Transverse colon (tissue), 4 donors: ENCODE measurements at regions of chr2 and their contacts with region 1.

Region 1: DNA sequence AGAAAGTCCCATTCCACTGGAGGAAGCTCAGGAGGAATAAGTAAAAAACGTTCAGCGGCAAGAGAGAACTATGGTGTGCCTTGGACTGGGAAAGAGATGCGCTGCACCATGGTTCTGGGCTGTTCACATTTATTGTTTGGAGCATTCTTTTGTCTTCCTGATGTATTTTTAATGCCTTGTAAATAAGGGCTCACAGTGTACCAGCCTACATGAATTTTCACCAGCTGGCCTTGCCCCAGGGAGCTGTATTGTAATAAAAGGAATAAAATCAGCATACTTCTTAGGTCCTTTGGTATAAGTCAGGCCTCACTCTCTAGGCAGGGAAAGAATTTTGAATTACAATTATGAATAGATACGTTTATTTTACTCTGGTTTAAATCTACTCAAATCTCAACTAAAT is 1249.6 kb downstream of the CNTNAP5 start:
- DNase-seq: no peak
- H3K4me3 ChIP-seq: no peak overlapping the region
- H3K27ac ChIP-seq: no peak overlapping the region
- H3K4me1 ChIP-seq: no peaks in the 10 kb centered on the region
- H3K27me3 ChIP-seq: no peaks in the 10 kb centered on the region
- CTCF ChIP-seq: no peak
- EP300 ChIP-seq: no peak
- POLR2A ChIP-seq: no peak

Region 2: DNA sequence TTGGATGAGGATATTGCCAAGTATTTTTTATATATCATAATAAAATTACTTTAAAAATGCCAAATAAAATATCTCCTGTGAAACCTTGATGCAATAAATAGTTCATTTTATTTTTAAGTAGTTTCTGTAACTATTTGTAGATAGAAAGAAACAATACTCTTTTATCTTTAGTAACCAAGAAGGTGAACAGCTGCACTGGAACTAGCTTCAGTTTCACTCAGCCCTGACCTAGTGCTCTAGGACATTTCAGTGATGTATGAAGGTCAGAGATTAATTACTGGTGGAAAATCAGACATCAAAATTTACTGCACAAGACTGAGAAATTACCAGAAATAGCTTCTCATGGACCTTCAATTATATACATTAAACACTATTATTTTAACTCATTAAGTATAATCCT is 55.4 kb after region 1 on chr2:
- in situ Hi-C with region 1: no loop called
- intact Hi-C with region 1: loop called (anchors 2 kb)
- DNase-seq: no peak
- H3K4me3 ChIP-seq: no peak overlapping the region
- H3K27ac ChIP-seq: no peak overlapping the region
- H3K4me1 ChIP-seq: no peaks in the 10 kb centered on the region
- H3K27me3 ChIP-seq: no peaks in the 10 kb centered on the region
- CTCF ChIP-seq: no peak
- EP300 ChIP-seq: no peak
- POLR2A ChIP-seq: no peak